ENCODE measurements at regions of chr14 and their contacts with region 1.

Region 1: GRCh38 chr14:94376108-94376975 is 12.1 kb downstream of the SERPINA1 start:
- DNase-seq: no peak
- ATAC-seq: no peak

Region 2: DNA sequence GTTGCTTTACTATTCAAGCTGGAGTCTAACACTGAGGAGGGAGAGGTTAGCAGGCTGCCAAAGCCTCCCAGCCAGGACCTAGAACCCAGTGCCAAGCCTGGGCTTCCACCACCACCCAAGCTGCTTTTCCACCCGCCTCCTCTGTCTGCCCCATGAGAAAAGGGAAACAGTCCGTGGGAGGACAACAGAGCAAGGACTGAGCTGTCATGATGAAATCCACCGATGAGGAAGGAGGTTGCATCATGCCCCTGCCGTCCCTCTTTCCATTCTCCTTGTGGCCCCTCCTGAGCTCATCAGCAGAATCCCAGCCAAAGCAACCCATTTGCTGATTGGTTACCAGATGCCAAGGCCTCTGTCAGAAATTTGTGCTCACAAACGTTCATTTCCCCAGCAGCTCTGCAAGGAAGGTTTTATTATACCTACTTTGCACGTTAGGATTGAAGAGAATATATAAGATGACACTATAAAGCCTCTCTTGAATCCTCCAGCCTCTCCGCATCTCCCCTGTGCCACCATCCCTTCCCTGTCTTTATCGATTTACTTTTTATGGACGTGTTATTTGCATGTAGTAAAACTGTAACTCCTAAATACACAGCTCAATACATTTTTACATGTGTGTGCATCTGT is 18.4 kb after region 1 on chr14:
- intact Hi-C with region 1: loop called (anchors 1 kb)
- DNase-seq: no peak
- ATAC-seq: peak; percentile 85

Measured in sciatic nerve (tissue), 2 donors.